Ovary (tissue), 10 donors: ENCODE measurements at regions of chr5 and their contacts with region 1.

Region 1: GRCh38 chr5:152389208-152389849 is 15.8 kb downstream of the NMUR2 start:
- DNase-seq: no peak
- H3K4me3 ChIP-seq: no peak overlapping the region
- H3K27ac ChIP-seq: no peak overlapping the region
- H3K4me1 ChIP-seq: no peaks in the 10 kb centered on the region
- H3K27me3 ChIP-seq: no peaks in the 10 kb centered on the region
- CTCF ChIP-seq: no peak
- EP300 ChIP-seq: no peak
- POLR2A ChIP-seq: no peak

Region 2: DNA sequence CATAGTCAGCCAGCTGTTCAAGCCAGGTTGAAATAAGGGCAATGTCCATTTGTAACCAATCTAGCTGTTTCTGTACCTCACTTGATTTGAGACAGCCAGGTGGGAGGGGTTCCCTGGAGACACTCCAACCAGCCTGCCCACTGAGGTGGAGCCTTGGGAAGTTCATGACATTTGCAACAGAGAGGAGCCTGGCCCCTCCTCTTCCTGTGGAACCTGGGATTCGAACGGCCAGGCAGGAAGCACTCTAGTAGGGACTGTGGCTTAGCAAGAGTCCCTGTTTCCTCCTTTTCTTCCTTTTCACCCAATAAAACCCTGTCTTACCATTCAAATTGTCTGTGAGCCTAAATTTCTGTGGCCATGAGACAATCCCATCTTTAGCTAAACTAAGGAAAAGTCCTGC is 328.1 kb after region 1 on chr5:
- intact Hi-C with region 1: loop called in 1 of 4 experiments (anchors 5 kb)
- DNase-seq: no peak
- H3K4me3 ChIP-seq: no peak overlapping the region
- H3K27ac ChIP-seq: no peak overlapping the region
- H3K4me1 ChIP-seq: no peaks in the 10 kb centered on the region
- H3K27me3 ChIP-seq: no peaks in the 10 kb centered on the region
- CTCF ChIP-seq: no peak
- EP300 ChIP-seq: no peak
- POLR2A ChIP-seq: no peak